Endothelial cell of umbilical vein (primary cell): ENCODE measurements at regions of chr3 and their contacts with region 1.

Region 1: DNA sequence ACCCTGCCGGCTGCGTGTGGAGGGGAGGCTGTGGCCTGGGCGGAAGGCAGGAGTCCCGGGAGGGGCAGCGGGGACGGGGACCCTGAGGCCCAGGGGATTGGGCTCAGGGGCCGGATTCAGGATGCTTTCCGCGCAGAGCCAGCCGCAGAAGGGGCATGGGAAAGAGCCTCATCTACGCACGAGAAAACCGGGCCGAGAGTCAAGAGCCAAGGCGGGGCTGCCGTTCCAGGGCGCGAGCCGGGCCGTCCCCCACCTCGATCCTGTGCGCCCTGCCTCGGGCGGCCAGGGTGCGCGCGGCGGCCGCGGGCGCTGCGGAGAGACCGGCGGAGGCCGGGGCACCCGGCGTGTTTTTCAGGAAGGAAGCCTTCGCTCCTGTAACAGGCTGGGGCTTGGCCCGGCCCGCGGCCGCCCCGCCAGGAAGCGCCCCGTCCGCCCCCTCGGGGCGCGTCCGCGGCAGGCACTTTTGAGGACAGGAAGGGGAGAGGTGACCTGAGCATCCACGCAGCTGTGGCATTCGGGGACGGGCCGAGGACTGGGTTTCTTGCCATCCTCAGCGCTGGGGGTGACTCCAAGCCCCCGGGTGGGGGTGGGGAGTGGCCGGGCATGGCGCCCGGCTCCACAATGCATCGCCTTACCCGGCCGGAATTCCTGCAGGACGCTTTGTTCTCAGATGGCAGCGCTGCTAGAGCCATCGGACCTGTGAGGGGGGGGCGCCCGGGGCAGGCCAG is 62.3 kb upstream of the GATA2 start:
- DNase-seq: peak; percentile 86
- H3K4me3 ChIP-seq: no peak overlapping the region
- H3K27ac ChIP-seq: peak overlapping the region; percentile 75
- H3K4me1 ChIP-seq: peaks cover 40% of the 10 kb centered on the region
- H3K27me3 ChIP-seq: no peaks in the 10 kb centered on the region
- CTCF ChIP-seq: no peak
- POLR2A ChIP-seq: peak; percentile 35

Region 2: GRCh38 chr3:128297401-128298138 is 257.7 kb before region 1 on chr3:
- CTCF ChIA-PET with region 1: no interaction called
- POLR2A ChIA-PET with region 1: no interaction called
- dilution Hi-C with region 1: no loop called
- intact Hi-C with region 1: no loop called
- DNase-seq: no peak
- H3K4me3 ChIP-seq: no peak overlapping the region
- H3K27ac ChIP-seq: no peak overlapping the region
- H3K4me1 ChIP-seq: no peaks in the 10 kb centered on the region
- H3K27me3 ChIP-seq: no peaks in the 10 kb centered on the region
- CTCF ChIP-seq: no peak
- POLR2A ChIP-seq: no peak

Region 3: DNA sequence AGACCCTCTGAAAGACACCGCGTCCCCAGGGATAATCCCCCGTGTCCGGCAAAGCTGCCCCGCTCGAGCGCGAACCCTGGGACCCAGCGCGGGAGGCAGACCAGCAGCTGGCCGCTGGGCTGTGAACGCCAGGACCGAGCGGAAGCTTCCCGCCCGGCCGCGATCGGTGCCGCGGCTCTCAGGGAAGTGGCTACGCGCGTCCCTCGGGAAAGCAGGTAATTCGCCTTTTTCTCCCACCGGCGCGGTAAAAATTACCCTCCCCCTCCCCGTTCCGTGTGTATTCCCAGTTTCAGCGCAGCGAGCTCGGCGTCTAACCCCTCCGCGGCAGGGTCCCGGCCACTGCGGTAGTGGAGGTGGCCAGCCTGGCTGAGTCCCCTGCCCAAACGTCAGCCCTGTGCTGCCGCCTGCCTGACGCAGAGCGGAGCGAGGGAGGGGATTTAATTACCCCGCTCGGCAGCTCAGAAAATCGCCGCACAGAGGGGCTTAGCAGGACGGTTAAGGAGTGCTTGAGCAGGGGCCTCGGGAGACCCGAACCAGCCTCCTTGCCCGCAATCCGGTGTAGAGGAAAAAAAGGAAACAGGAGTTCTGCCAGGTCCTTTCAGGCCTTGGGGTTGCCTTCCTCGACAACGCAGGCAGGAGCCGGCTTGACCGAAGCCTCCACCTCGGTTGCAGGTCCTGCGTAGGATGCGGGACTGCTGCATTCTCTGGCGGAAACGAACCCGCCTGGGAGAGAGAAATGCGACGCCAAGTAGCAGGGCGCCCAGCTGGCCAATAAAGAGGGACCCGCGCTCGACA is 65.2 kb before region 1 on chr3:
- CTCF ChIA-PET with region 1: interaction called, 18 read pairs
- POLR2A ChIA-PET with region 1: no interaction called
- dilution Hi-C with region 1: no loop called
- intact Hi-C with region 1: loop called (anchors 2 kb)
- DNase-seq: peak; percentile 77
- H3K4me3 ChIP-seq: peak overlapping the region; percentile 77 to 95 (median 83)
- H3K27ac ChIP-seq: peak overlapping the region; percentile 97
- H3K4me1 ChIP-seq: peaks cover 15% of the 10 kb centered on the region
- H3K27me3 ChIP-seq: no peaks in the 10 kb centered on the region
- CTCF ChIP-seq: no peak
- POLR2A ChIP-seq: no peak

Region 4: DNA sequence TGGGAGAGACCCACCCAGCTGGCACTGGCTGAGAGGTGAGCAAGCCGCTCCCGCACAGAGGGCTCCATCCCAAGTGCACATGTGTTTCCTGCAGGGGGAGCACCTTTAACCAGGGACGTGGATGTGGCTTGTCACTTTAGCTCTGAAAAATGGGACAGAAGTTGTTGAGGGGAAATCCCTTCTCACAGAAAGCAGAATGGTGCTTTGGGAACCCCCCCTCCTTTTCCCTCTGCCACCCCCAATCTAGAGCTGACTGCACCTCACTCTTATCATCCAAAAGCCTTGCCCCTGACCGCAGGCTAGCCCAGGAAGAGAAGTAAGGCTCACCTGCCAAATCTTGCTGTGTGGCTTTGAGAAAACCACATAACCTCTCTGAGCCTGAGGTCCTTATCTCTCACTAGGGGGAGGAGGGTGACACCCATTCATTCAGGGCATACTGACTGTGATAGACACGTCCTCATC is 17.4 kb after region 1 on chr3:
- CTCF ChIA-PET with region 1: interaction called, 12 read pairs
- POLR2A ChIA-PET with region 1: no interaction called
- dilution Hi-C with region 1: no loop called
- intact Hi-C with region 1: loop called (anchors 1 kb)
- DNase-seq: no peak
- H3K4me3 ChIP-seq: no peak overlapping the region
- H3K27ac ChIP-seq: no peak overlapping the region
- H3K4me1 ChIP-seq: peaks cover 22% of the 10 kb centered on the region
- H3K27me3 ChIP-seq: peaks cover 16 to 50% of the 10 kb centered on the region in 2 experiments
- CTCF ChIP-seq: peak; percentile 23 to 24
- POLR2A ChIP-seq: no peak